H1 (cell line): ENCODE measurements at regions of chr7 and their contacts with region 1.

Region 1: GRCh38 chr7:113421696-113422330 is 303.5 kb upstream of the SMIM30 start:
- DNase-seq: peak; percentile 38 to 86
- H3K4me3 ChIP-seq: no peak overlapping the region
- H3K27ac ChIP-seq: no peak overlapping the region
- H3K4me1 ChIP-seq: no peaks in the 10 kb centered on the region
- H3K27me3 ChIP-seq: no peaks in the 10 kb centered on the region
- CTCF ChIP-seq: peak; percentile 49 to 93 (median 82)
- EP300 ChIP-seq: no peak
- POLR2A ChIP-seq: no peak
- RAD21 ChIP-seq: peak; percentile 90 to 94

Region 2: DNA sequence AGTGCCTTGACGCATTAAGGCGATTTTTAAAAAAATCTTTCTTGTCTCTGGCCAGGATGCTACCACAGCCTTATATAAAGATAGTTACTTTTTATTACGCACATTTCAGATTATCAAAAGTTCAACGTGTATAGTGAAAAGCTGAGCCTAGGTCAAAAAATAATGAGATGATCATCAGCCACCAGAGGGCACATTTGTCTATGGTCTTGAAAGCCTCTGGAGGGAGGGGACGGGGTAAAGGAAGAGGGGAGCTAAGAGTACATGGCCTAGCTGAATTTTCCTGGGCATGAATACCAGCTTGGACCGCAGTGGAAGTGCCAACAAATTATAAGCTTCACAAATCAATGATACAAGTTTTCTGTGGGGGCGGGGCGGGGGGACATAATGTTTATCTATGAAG is 17.6 kb before region 1 on chr7:
- CTCF ChIA-PET with region 1: interaction called, 37 read pairs
- POLR2A ChIA-PET with region 1: no interaction called
- DNase-seq: peak in 1 of 2 experiments; percentile 13
- H3K4me3 ChIP-seq: no peak overlapping the region
- H3K27ac ChIP-seq: no peak overlapping the region
- H3K4me1 ChIP-seq: no peaks in the 10 kb centered on the region
- H3K27me3 ChIP-seq: no peaks in the 10 kb centered on the region
- CTCF ChIP-seq: peak in 2 of 3 experiments; percentile 59 to 61; a peak in 3 of 4 replicates
- EP300 ChIP-seq: no peak
- POLR2A ChIP-seq: no peak
- RAD21 ChIP-seq: peak; percentile 64 to 73

Region 3: GRCh38 chr7:113440173-113440572 is 18.4 kb after region 1 on chr7:
- CTCF ChIA-PET with region 1: no interaction called
- POLR2A ChIA-PET with region 1: no interaction called
- DNase-seq: no peak
- H3K4me3 ChIP-seq: no peak overlapping the region
- H3K27ac ChIP-seq: no peak overlapping the region
- H3K4me1 ChIP-seq: no peaks in the 10 kb centered on the region
- H3K27me3 ChIP-seq: no peaks in the 10 kb centered on the region
- CTCF ChIP-seq: no peak
- EP300 ChIP-seq: no peak
- POLR2A ChIP-seq: no peak
- RAD21 ChIP-seq: no peak

Region 4: GRCh38 chr7:113636727-113637421 is 215.1 kb after region 1 on chr7:
- CTCF ChIA-PET with region 1: no interaction called
- POLR2A ChIA-PET with region 1: no interaction called
- DNase-seq: no peak
- H3K4me3 ChIP-seq: no peak overlapping the region
- H3K27ac ChIP-seq: no peak overlapping the region
- H3K4me1 ChIP-seq: no peaks in the 10 kb centered on the region
- H3K27me3 ChIP-seq: no peaks in the 10 kb centered on the region
- CTCF ChIP-seq: no peak
- EP300 ChIP-seq: no peak
- POLR2A ChIP-seq: no peak
- RAD21 ChIP-seq: no peak

Region 5: DNA sequence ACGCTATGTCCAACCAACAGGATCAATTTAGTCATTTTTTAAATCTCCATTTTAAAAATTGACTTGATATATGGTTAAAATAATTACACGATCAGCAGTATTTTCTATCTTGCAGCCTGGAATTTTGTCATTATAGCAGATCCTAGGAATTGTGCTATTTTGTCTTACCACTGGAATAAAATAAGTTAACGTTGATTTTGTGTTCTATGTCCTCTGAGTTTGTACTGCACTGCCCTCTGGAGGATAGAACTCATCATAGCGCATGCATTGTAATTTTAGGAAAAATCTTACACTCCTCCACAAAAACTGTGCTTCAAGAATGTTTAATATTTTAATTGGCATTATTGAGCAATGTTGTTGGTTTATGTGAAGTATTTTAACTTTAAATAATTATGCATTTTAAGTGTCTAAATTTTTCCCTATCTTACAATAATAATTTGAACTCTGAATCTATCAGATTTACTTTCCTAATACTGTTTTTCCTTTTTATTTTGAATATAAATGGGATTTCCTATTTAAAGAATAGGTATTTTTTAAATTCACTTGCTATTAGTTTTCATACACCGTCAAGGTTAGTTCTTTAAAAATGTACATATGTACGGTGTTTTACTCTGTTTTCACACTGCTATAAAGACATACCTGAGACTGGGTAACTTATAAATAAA is 276.9 kb after region 1 on chr7:
- CTCF ChIA-PET with region 1: interaction called, 16 read pairs
- POLR2A ChIA-PET with region 1: no interaction called
- DNase-seq: no peak
- H3K4me3 ChIP-seq: no peak overlapping the region
- H3K27ac ChIP-seq: no peak overlapping the region
- H3K4me1 ChIP-seq: no peaks in the 10 kb centered on the region
- H3K27me3 ChIP-seq: no peaks in the 10 kb centered on the region
- CTCF ChIP-seq: peak in 2 of 3 experiments; percentile 44 to 66; a peak in 2 of 4 replicates
- EP300 ChIP-seq: no peak
- POLR2A ChIP-seq: no peak
- RAD21 ChIP-seq: peak; percentile 76 to 77